ENCODE measurements at regions of chr12 and their contacts with region 1.

Region 1: GRCh38 chr12:49954863-49955830 is 4.6 kb downstream of the AQP2 start:
- DNase-seq: peak in 2 of 10 donors; percentile 35 to 36
- H3K4me3 ChIP-seq: no peak overlapping the region
- H3K27ac ChIP-seq: no peak overlapping the region
- H3K27me3 ChIP-seq: peaks cover 0 to 34% (median 4%) of the 10 kb centered on the region in 45 donors
- CTCF ChIP-seq: no peak

Region 2: DNA sequence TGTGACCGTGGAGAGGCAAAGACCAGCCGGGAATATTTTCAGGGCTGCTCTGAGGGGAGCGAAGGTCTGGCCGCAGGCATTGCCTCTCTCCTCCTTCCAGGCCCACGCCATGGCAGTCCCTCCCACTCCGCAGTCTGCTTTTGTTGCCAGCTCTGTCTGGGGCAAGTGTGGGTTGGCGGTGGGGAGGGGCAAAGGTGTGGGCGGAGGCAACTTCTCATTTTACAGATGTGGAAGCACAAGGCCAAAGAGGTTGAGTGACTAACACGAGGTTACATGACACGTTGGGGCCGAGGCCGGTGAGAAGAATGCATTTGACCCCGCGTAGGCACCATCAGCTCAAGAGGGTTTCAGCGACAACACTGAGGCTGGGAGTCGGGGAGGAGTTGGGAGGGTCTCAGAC is 45.3 kb before region 1 on chr12:
- intact Hi-C with region 1: loop called in 1 of 2 experiments (anchors 5 kb)
- DNase-seq: no peak
- H3K4me3 ChIP-seq: no peak overlapping the region
- H3K27ac ChIP-seq: no peak overlapping the region
- H3K27me3 ChIP-seq: no peaks in the 10 kb centered on the region
- CTCF ChIP-seq: no peak

Measured in dorsolateral prefrontal cortex (tissue), 120 donors.